Activated CD8-positive, alpha-beta T cell treated with anti-CD3 and anti-CD28 coated beads for 36 hours (primary cell): ENCODE measurements at regions of chr11 and their contacts with region 1.

Region 1: DNA sequence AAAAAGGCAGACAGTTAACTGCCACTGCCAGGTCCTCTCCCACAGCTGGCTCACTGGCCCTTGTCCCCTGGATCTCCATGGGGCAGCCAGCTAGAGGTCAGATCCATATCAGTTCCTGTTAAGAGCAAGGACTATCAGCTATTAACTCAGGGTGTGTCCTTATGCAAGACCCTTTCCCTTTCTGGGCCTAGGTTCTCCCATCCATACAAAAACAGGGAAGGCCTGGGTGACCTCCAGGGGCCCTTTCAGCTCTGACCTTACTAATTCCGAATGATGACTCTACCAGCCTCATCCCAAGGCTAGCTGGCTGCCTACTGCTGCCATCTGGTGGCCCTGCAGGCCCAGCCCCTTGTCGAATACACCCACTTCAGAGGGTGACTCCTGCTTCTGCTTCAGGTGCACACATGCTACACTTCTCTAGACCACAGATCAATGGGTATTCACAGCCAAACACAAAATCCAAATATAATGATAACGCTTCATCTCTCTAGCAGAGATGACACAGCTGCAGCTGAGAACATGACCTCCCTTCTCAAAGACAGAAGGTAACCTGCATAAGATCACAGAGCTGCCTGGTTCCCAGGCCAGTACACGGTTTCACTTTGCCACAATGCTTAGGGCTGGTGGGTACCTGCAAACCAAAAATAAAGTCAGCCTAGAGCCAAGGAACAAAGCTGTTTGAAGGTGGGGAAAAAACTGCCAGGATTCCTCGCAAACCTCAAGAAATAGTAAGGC is 34.1 kb downstream of the SERGEF start:
- DNase-seq: peak; percentile 41
- ATAC-seq: no peak
- H3K4me3 Mint-ChIP-seq: no peak overlapping the region
- H3K27ac Mint-ChIP-seq: no peak overlapping the region
- H3K4me1 Mint-ChIP-seq: no peaks in the 10 kb centered on the region
- H3K27me3 Mint-ChIP-seq: no peaks in the 10 kb centered on the region
- CTCF ChIP-seq: peak; percentile 32

Region 2: DNA sequence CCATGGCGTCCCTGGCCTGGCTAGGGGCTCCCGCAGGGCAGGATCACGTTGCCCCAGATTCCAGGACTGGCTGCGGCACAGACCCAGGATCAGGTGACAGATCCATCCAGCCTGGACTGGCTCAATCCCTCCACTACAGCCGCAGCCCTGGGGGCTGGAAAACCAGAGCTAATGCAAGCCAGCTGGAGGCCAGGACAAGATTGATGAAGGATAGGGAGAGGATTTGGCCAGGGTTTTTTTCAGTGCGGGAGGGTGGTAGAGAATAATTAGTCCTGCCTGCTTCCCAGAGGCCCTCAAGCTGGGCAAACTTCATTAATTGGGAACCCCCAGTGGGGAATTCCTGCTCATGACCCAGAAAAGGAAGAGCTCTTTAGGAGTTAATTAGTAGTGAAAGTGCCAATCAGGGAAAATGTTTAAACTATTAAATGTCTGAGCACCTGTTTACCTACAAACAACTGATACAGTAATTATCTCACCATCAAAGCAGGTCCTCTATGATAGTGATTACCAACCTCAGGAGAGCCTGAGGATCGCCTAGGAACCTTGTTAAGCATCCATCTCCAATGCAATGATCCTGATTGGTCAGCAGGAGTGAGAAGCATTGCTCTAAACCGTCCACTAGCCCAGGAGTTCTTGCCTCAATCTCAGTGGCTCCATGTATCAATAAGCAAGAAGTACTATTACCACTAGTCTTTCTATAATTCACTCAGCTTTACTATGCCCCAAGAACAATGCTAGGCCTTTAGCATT is 292.3 kb before region 1 on chr11:
- CTCF ChIA-PET with region 1: no interaction called
- POLR2A ChIA-PET with region 1: no interaction called
- intact Hi-C with region 1: no loop called
- DNase-seq: no peak
- ATAC-seq: no peak
- H3K4me3 Mint-ChIP-seq: no peak overlapping the region
- H3K27ac Mint-ChIP-seq: no peak overlapping the region
- H3K4me1 Mint-ChIP-seq: no peaks in the 10 kb centered on the region
- H3K27me3 Mint-ChIP-seq: peaks cover 12% of the 10 kb centered on the region
- CTCF ChIP-seq: no peak

Region 3: DNA sequence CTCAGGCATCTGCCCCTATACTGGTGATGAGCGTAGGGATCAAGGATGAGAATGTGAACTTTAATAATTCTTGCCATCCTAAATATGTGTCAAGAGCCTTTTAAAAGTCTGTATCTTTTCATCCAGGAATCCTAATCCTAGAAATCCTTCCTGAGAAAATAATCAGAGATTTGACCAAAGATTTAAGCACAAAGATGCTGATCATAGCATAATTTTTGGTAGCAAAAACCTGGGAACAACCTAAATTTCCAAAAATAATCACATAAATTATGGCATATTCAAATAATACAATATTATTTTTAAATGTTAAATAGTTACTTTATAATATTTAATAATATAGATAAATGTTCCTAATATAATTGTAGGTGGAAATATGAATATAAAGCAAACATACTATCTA is 41.9 kb before region 1 on chr11:
- CTCF ChIA-PET with region 1: no interaction called
- POLR2A ChIA-PET with region 1: no interaction called
- intact Hi-C with region 1: no loop called
- DNase-seq: no peak
- ATAC-seq: no peak
- H3K4me3 Mint-ChIP-seq: no peak overlapping the region
- H3K27ac Mint-ChIP-seq: no peak overlapping the region
- H3K4me1 Mint-ChIP-seq: no peaks in the 10 kb centered on the region
- H3K27me3 Mint-ChIP-seq: no peaks in the 10 kb centered on the region
- CTCF ChIP-seq: no peak

Region 4: DNA sequence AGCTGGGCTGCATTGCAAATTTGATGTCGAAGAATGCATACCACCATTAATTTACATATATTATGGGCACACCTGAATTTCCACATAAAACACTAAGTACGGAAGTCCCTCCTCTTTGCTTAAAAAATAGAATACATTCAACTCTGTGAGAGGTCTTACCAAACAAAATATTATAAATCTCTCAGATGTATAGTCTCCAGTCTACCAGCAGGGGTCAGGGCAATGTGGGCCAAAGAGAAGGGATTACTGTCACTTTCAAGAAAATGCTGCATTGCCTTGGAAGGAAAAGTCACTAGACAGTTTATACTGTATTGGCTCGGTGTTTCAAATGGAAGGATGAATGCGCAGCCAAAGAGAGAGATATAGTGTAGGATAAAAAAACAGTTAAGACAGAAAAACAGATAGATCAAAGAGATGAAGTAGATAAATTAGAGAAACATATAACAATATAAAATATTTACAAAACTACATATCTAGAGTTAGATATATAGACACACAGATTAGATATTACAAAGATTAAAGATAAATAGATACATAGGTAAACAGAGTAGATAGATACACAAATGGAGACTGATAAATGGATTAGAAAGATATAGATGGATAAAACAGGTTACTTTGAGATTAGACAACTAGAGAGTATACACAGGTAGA is 13.2 kb after region 1 on chr11:
- CTCF ChIA-PET with region 1: interaction called, 19 read pairs
- POLR2A ChIA-PET with region 1: no interaction called
- intact Hi-C with region 1: no loop called
- DNase-seq: peak; percentile 54
- ATAC-seq: peak; percentile 83
- H3K4me3 Mint-ChIP-seq: no peak overlapping the region
- H3K27ac Mint-ChIP-seq: no peak overlapping the region
- H3K4me1 Mint-ChIP-seq: peaks cover 2% of the 10 kb centered on the region
- H3K27me3 Mint-ChIP-seq: no peaks in the 10 kb centered on the region
- CTCF ChIP-seq: peak; percentile 86